Sciatic nerve (tissue), 2 donors: ENCODE measurements at regions of chr6 and their contacts with region 1.

Region 1: GRCh38 chr6:139219271-139219729 is 72.5 kb downstream of the TXLNB start:
- DNase-seq: peak; percentile 86
- ATAC-seq: peak; percentile 98

Region 2: DNA sequence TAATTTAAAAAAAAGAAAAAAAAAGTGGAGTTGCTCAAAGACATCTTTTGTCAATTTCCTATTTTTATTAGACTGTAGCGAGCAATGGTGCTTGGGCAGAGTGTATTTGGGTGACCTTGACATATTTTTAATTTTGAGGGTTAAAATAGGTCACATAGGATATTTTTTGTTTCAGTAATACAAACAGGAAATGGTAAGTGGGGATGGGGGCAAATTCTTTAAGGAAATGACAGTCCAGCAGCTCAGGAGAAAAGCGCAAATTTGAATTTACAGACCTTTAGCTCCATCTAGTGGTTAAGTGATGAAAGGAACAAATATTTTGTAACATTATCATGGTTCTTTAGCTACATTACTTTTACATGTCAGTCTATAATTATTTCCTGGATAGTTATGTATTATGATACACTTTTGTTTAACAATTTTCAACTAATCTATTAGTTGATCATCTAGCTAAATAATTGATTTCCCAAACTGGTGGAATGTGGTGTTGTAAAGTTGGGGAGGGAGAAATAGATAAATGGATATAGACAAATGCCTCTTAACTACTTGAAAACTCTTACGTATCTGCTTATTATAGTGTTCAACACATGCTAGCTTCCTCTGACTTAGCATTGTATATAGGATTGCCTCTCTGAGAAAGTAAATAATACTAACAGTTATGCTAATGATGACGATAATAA is 145.1 kb after region 1 on chr6:
- intact Hi-C with region 1: loop called (anchors 5 kb)
- DNase-seq: no peak
- ATAC-seq: peak; percentile 53